ENCODE measurements at regions of chr10 and their contacts with region 1.

Region 1: GRCh38 chr10:73096449-73097304 is at the start of gene P4HA1:
- DNase-seq: peak; percentile 100
- ATAC-seq: peak; percentile 90
- H3K4me3 ChIP-seq: peak within 1 kb of the TSS; percentile 64
- H3K27ac ChIP-seq: peak within 1 kb of the TSS; percentile 34
- H3K4me1 ChIP-seq: peaks cover 20% of the 10 kb centered on the region
- H3K27me3 ChIP-seq: no peaks in the 10 kb centered on the region
- CTCF ChIP-seq: peak; percentile 99
- total RNA-seq, gene P4HA1: 164 and 181 TPM in 2 replicates

Region 2: DNA sequence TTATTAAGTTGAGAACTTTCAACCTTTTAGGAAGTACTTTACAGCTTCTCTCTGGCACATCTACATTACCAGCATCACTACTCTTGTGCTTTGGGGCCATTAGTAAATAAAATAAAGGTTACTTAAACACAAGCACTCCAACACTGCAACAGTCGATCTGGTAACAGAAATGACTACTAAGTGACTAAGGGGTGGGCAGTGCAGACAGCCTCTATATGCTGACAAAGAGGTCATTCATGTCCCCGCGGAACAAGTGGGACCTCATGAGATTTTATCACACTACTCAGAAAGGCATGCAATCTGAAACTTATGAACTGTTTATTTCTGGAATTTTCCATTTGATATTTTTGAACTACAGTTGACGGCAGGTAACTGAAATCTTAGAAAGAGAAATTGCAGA is 630.7 kb before region 1 on chr10:
- CTCF ChIA-PET with region 1: no interaction called
- POLR2A ChIA-PET with region 1: interaction called, 10 read pairs
- intact Hi-C with region 1: no loop called
- DNase-seq: peak; percentile 61
- ATAC-seq: peak; percentile 72
- H3K4me3 ChIP-seq: no peak overlapping the region
- H3K27ac ChIP-seq: peak overlapping the region; percentile 63
- H3K4me1 ChIP-seq: peaks cover 26% of the 10 kb centered on the region
- H3K27me3 ChIP-seq: no peaks in the 10 kb centered on the region
- CTCF ChIP-seq: no peak

Region 3: DNA sequence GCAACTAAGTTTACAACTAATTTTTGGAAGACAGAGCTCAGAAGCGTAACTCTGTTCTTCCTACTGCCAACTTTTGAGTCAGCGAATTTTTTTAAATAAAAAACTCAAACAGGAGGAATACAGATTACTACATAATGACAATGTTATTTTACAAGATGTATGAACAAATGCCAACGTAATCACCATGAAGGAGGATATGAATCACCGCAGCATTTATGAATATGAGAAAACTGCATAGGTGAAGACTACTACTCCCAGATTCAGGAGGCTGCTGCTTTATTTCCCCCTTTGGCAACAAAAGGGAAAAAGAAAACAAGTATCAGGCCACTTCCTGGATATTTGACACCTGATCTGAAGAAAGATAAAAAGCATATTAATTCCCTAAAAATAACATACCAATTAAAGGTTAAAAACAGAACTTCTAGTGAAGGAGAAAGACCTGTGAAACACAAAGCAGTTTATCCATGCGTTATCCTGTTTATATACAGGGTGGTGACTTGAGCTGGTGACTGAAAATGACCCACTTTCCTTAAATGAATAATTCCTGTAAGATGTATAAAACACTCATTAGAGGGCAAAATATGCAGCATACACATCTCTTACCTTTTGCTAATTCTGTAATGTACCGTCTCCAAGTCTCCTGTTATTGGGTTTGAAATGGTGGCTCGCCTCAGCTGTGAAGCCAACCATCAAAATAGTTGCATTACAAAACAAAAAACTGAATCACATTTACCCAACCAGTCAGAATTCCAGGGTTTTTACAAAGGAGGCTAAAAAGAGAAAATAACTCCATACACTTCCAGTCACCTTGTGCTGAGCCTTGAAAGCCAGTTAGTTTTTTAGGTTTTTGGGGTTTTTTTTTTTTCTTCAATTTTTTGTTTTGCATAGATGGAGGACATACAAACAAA is 52.0 kb before region 1 on chr10:
- CTCF ChIA-PET with region 1: no interaction called
- POLR2A ChIA-PET with region 1: interaction called, 7 read pairs
- intact Hi-C with region 1: loop called (anchors 1 kb)
- DNase-seq: peak; percentile 100
- ATAC-seq: peak; percentile 86
- H3K4me3 ChIP-seq: peak overlapping the region; percentile 30
- H3K27ac ChIP-seq: peak overlapping the region; percentile 77
- H3K4me1 ChIP-seq: peaks cover 70% of the 10 kb centered on the region
- H3K27me3 ChIP-seq: no peaks in the 10 kb centered on the region
- CTCF ChIP-seq: no peak

Region 4: GRCh38 chr10:73110345-73110849 is 13.7 kb after region 1 on chr10 and contains the start of gene NUDT13:
- CTCF ChIA-PET with region 1: interaction called, 17 read pairs
- POLR2A ChIA-PET with region 1: interaction called, 21 read pairs
- intact Hi-C with region 1: no loop called
- DNase-seq: peak; percentile 72
- ATAC-seq: peak; percentile 63
- H3K4me3 ChIP-seq: peak within 1 kb of the TSS; percentile 54
- H3K27ac ChIP-seq: peak within 1 kb of the TSS; percentile 68
- H3K4me1 ChIP-seq: peaks cover 30% of the 10 kb centered on the region
- H3K27me3 ChIP-seq: no peaks in the 10 kb centered on the region
- CTCF ChIP-seq: no peak
- total RNA-seq, gene NUDT13: 1.1 and 1.8 TPM in 2 replicates

Region 5: GRCh38 chr10:73159038-73159648 is 62.5 kb after region 1 on chr10:
- CTCF ChIA-PET with region 1: interaction called, 14 read pairs
- POLR2A ChIA-PET with region 1: interaction called, 7 read pairs
- intact Hi-C with region 1: loop called (anchors 1 kb)
- DNase-seq: peak; percentile 97
- ATAC-seq: peak; percentile 62
- H3K4me3 ChIP-seq: no peak overlapping the region
- H3K27ac ChIP-seq: no peak overlapping the region
- H3K4me1 ChIP-seq: peaks cover 4% of the 10 kb centered on the region; the same call in 1 of the 2 replicates
- H3K27me3 ChIP-seq: no peaks in the 10 kb centered on the region
- CTCF ChIP-seq: peak; percentile 99

Region 6: DNA sequence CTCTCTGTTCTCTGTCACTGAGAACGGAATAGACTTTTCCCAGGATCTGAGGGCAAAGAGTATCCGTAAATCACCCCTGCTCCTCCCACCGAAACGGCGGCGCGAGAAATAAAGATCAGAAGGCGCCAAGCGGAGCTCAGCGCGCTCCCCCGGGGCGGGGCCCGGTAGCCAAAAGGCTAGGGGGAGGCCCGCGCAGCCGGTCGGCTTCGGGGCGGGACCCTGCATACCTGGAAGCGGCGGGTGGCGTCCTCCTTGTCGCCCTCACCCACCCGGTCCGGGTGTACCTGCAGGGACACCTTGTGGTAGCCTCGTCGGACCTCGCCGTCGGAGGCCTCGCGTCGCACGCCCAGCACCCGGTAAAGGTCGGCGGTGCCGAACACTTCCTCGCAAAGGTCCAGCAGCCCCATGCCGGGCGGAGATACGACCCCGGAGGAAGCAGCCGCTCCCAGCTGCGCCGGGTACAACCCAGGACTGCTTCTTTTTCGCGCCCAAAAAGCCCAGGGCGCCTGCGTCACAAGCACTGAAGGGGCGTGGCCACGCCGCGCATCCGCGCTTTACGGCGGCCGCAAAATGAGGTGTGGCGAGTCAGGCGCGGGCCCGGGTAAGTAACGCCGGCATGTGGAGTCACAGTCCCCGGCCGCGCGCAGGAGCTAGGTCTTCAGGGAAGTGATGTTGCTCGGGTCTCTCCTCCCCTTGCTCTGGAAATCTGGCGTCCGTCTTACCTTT is 150.3 kb after region 1 on chr10 and contains the start of gene DNAJC9:
- CTCF ChIA-PET with region 1: interaction called, 13 read pairs
- POLR2A ChIA-PET with region 1: interaction called, 16 read pairs
- intact Hi-C with region 1: loop called (anchors 1 kb)
- DNase-seq: peak; percentile 100
- ATAC-seq: peak; percentile 84
- H3K4me3 ChIP-seq: peak within 1 kb of the TSS; percentile 69
- H3K27ac ChIP-seq: peak within 1 kb of the TSS; percentile 80
- H3K4me1 ChIP-seq: peaks cover 50% of the 10 kb centered on the region
- H3K27me3 ChIP-seq: no peaks in the 10 kb centered on the region
- CTCF ChIP-seq: peak; percentile 56
- total RNA-seq, gene DNAJC9: 282 and 283 TPM in 2 replicates

Region 7: GRCh38 chr10:73358331-73359279 is 261.9 kb after region 1 on chr10 and contains the start of gene CFAP70:
- CTCF ChIA-PET with region 1: no interaction called
- POLR2A ChIA-PET with region 1: interaction called, 4 read pairs
- intact Hi-C with region 1: loop called (anchors 5 kb)
- DNase-seq: peak; percentile 100
- ATAC-seq: peak; percentile 93
- H3K4me3 ChIP-seq: peak within 1 kb of the TSS; percentile 66
- H3K27ac ChIP-seq: no peak within 1 kb of the TSS
- H3K4me1 ChIP-seq: peaks cover 16% of the 10 kb centered on the region
- H3K27me3 ChIP-seq: peaks cover 9% of the 10 kb centered on the region
- CTCF ChIP-seq: no peak
- total RNA-seq, gene CFAP70: 0.73 and 0.92 TPM in 2 replicates

Measured in PC-3 (cell line).